Heart right ventricle (tissue), 16 donors: ENCODE measurements at regions of chr14 and their contacts with region 1.

Region 1: DNA sequence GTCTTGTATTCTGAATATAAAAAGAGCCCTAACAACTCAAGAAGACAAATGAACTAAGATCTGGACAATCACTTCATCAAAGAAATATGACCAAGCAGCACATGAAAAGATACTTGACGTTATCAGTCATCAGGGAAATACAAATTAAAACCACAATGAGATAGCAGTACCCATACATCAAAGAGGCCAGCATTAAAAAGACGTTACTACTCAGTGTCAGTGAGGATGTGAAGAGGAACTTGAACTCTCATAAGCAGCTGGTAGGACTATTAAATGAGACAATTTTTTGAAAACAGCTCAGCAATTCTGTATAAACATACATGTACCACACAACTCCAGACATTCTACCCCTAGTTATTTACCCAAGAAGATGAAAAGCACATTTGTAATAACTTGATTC is 55.9 kb downstream of the FERMT2 start:
- DNase-seq: no peak
- ATAC-seq: no peak
- H3K4me3 ChIP-seq: no peak overlapping the region
- H3K27ac ChIP-seq: no peak overlapping the region
- H3K4me1 ChIP-seq: peaks cover 0 to 51% (median 28%) of the 10 kb centered on the region in 9 donors
- H3K27me3 ChIP-seq: no peaks in the 10 kb centered on the region
- CTCF ChIP-seq: no peak

Region 2: GRCh38 chr14:52729925-52730667 is 164.9 kb before region 1 on chr14 and contains the start of gene STYX:
- intact Hi-C with region 1: no loop called
- DNase-seq: peak; percentile 99
- ATAC-seq: peak; percentile 99 to 100 (median 99)
- H3K4me3 ChIP-seq: peak within 1 kb of the TSS; percentile 62 to 95 (median 92)
- H3K27ac ChIP-seq: peak within 1 kb of the TSS; percentile 38 to 94 (median 90)
- H3K4me1 ChIP-seq: peaks cover 0 to 18% (median 11%) of the 10 kb centered on the region in 9 donors
- H3K27me3 ChIP-seq: no peaks in the 10 kb centered on the region
- CTCF ChIP-seq: peak in 7 of 9 donors; percentile 23 to 49 (median 32)
- total RNA-seq, gene STYX: 12.9 to 15.8 (median 14.2) TPM

Region 3: DNA sequence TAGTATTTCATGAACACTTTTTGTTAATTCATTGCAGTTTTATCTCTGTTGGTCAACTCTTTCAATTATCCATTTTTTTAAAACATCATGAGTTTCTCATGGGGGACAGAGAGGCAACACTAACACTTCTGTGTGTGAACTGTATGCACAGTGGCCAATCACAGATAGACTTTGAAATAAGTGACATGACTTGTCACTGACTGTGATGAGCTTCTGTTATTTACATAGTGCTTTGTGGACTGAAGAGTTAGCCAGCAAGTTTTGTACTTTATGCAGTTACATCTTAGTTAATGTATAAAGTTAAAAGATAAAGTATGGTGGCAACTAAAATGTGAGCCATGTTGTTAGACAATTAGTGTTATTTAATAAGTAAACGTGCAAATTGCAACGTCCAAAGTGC is 39.8 kb after region 1 on chr14:
- intact Hi-C with region 1: loop called in 1 of 10 experiments (anchors 5 kb)
- DNase-seq: no peak
- ATAC-seq: peak in 1 of 8 donors; percentile 59
- H3K4me3 ChIP-seq: no peak overlapping the region
- H3K27ac ChIP-seq: no peak overlapping the region
- H3K4me1 ChIP-seq: peaks cover 12 to 98% (median 74%) of the 10 kb centered on the region in 9 donors
- H3K27me3 ChIP-seq: no peaks in the 10 kb centered on the region
- CTCF ChIP-seq: no peak